Thyroid gland (tissue), 4 donors: ENCODE measurements at regions of chr11 and their contacts with region 1.

Region 1: GRCh38 chr11:102614485-102614884 is 10.6 kb downstream of the MMP20 start:
- DNase-seq: no peak
- H3K4me3 ChIP-seq: no peak overlapping the region
- H3K27ac ChIP-seq: no peak overlapping the region
- H3K4me1 ChIP-seq: peaks cover 0 to 5% of the 10 kb centered on the region in 2 donors
- H3K27me3 ChIP-seq: no peaks in the 10 kb centered on the region
- CTCF ChIP-seq: peak in 1 of 6 experiments; percentile 10
- POLR2A ChIP-seq: no peak

Region 2: DNA sequence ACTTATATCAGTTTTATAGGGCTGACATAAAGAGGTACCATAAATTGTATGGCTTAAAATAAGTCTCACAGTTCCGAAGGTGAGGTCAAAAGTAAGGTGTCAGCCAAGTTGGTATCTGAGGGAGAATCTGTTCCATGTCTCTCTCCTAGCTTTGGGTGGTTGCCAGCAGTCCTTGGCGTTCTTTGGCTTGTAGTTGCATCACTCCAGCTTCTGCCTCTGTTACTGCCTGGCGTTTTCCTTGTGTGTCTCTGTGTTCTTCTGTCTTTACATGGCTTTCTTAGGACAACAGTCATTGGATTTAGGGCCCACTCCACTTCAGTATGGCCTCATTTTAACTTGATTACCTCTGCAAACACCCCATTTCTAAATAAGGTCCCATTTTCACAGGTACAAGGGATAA is 100.6 kb before region 1 on chr11:
- intact Hi-C with region 1: loop called (anchors 10 kb)
- DNase-seq: peak; percentile 88 to 90
- H3K4me3 ChIP-seq: no peak overlapping the region
- H3K27ac ChIP-seq: no peak overlapping the region
- H3K4me1 ChIP-seq: no peaks in the 10 kb centered on the region
- H3K27me3 ChIP-seq: no peaks in the 10 kb centered on the region
- CTCF ChIP-seq: no peak
- POLR2A ChIP-seq: no peak

Region 3: GRCh38 chr11:102733232-102733875 is 118.9 kb after region 1 on chr11:
- intact Hi-C with region 1: no loop called
- DNase-seq: no peak
- H3K4me3 ChIP-seq: no peak overlapping the region
- H3K27ac ChIP-seq: no peak overlapping the region
- H3K4me1 ChIP-seq: no peaks in the 10 kb centered on the region
- H3K27me3 ChIP-seq: no peaks in the 10 kb centered on the region
- CTCF ChIP-seq: no peak
- POLR2A ChIP-seq: no peak

Region 4: GRCh38 chr11:103499710-103500340 is 885.3 kb after region 1 on chr11:
- intact Hi-C with region 1: no loop called
- DNase-seq: no peak
- H3K4me3 ChIP-seq: no peak overlapping the region
- H3K27ac ChIP-seq: no peak overlapping the region
- H3K4me1 ChIP-seq: no peaks in the 10 kb centered on the region
- H3K27me3 ChIP-seq: no peaks in the 10 kb centered on the region
- CTCF ChIP-seq: no peak
- POLR2A ChIP-seq: no peak